ENCODE measurements at regions of chr6 and their contacts with region 1.

Region 1: GRCh38 chr6:138724015-138724414 is 49.6 kb upstream of the CCDC28A start:
- DNase-seq: no peak
- ATAC-seq: no peak
- H3K4me3 ChIP-seq: no peak overlapping the region
- H3K4me3 Mint-ChIP-seq: no peak overlapping the region
- H3K27ac ChIP-seq: no peak overlapping the region
- H3K27ac Mint-ChIP-seq: no peak overlapping the region
- H3K4me1 ChIP-seq: no peaks in the 10 kb centered on the region
- H3K4me1 Mint-ChIP-seq: peaks cover 0 to 5% (median 0%) of the 10 kb centered on the region in 3 donors
- H3K27me3 ChIP-seq: peaks cover 0 to 5% of the 10 kb centered on the region in 2 experiments
- H3K27me3 Mint-ChIP-seq: peaks cover 4 to 16% of the 10 kb centered on the region in 2 donors

Region 2: DNA sequence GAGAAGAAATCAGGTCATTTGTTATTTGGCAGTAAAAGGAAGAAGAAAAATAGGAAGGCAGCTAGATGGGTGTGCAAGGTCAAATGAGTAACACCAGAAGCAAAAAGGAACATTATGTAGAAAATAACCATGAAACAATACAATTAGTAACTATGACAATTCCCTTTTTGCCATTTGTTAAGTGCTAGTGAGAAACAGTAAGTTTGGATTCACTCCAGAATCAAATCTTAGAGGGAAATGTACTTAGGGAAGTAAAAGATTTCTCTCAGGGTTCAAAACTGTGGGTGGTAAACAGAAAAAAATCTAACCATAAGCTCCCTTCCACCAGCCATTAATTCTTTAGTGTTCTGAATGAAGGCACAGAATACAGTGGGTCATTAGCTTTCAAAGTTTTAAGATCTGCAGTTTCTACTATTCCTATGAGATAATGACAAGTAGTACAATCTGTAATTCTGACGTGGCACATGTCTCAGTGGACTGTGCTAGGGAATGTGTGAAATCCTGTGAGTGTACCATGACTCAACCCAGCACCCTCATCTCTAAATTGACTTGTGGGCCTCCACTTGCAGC is 246.9 kb after region 1 on chr6:
- CTCF ChIA-PET with region 1: no interaction called
- POLR2A ChIA-PET with region 1: no interaction called
- DNase-seq: peak in 1 of 35 experiments; percentile 27
- ATAC-seq: peak in 2 of 4 experiments; percentile 34 to 63
- H3K4me3 ChIP-seq: no peak overlapping the region
- H3K4me3 Mint-ChIP-seq: peak overlapping the region in 1 of 3 donors; percentile 0
- H3K27ac ChIP-seq: no peak overlapping the region
- H3K27ac Mint-ChIP-seq: no peak overlapping the region
- H3K4me1 ChIP-seq: peaks cover 8 to 14% of the 10 kb centered on the region in 2 experiments
- H3K4me1 Mint-ChIP-seq: peaks cover 76 to 90% (median 88%) of the 10 kb centered on the region in 3 donors
- H3K27me3 ChIP-seq: no peaks in the 10 kb centered on the region
- H3K27me3 Mint-ChIP-seq: no peaks in the 10 kb centered on the region

Region 3: GRCh38 chr6:139230391-139230840 is 506.4 kb after region 1 on chr6:
- CTCF ChIA-PET with region 1: no interaction called
- POLR2A ChIA-PET with region 1: interaction called in 1 of 2 experiments, 10 read pairs
- DNase-seq: peak in 5 of 35 experiments; percentile 3 to 31 (median 9)
- ATAC-seq: peak in 3 of 4 experiments; percentile 51 to 62 (median 58)
- H3K4me3 ChIP-seq: no peak overlapping the region
- H3K4me3 Mint-ChIP-seq: no peak overlapping the region
- H3K27ac ChIP-seq: no peak overlapping the region
- H3K27ac Mint-ChIP-seq: no peak overlapping the region
- H3K4me1 ChIP-seq: no peaks in the 10 kb centered on the region
- H3K4me1 Mint-ChIP-seq: peaks cover 8 to 16% (median 9%) of the 10 kb centered on the region in 3 donors
- H3K27me3 ChIP-seq: no peaks in the 10 kb centered on the region
- H3K27me3 Mint-ChIP-seq: no peaks in the 10 kb centered on the region